Heart left ventricle (tissue), 16 donors: ENCODE measurements at regions of chr2 and their contacts with region 1.

Region 1: GRCh38 chr2:69572641-69573040 is 70.9 kb downstream of the AAK1 start:
- DNase-seq: no peak
- ATAC-seq: peak in 2 of 4 donors; percentile 18 to 36
- H3K4me3 ChIP-seq: peak overlapping the region in 1 of 12 donors; percentile 23
- H3K27ac ChIP-seq: peak overlapping the region in 4 of 12 donors; percentile 6 to 62 (median 38)
- H3K4me1 ChIP-seq: peaks cover 0 to 78% (median 59%) of the 10 kb centered on the region in 12 donors
- H3K27me3 ChIP-seq: no peaks in the 10 kb centered on the region
- CTCF ChIP-seq: no peak
- POLR2A ChIP-seq: no peak

Region 2: GRCh38 chr2:69514406-69514805 is 58.2 kb before region 1 on chr2:
- intact Hi-C with region 1: no loop called
- DNase-seq: peak in 3 of 5 donors; percentile 38 to 76 (median 59)
- ATAC-seq: peak in 3 of 4 donors; percentile 46 to 56 (median 50)
- H3K4me3 ChIP-seq: no peak overlapping the region
- H3K27ac ChIP-seq: no peak overlapping the region
- H3K4me1 ChIP-seq: peaks cover 0 to 37% (median 8%) of the 10 kb centered on the region in 12 donors
- H3K27me3 ChIP-seq: no peaks in the 10 kb centered on the region
- CTCF ChIP-seq: peak in 1 of 12 donors; percentile 25
- POLR2A ChIP-seq: no peak

Region 3: GRCh38 chr2:69619725-69620124 is 47.1 kb after region 1 on chr2:
- intact Hi-C with region 1: loop called in 1 of 10 experiments (anchors 10 kb)
- DNase-seq: no peak
- ATAC-seq: peak in 3 of 4 donors; percentile 23 to 36 (median 28)
- H3K4me3 ChIP-seq: no peak overlapping the region
- H3K27ac ChIP-seq: peak overlapping the region in 2 of 12 donors; percentile 2 to 7
- H3K4me1 ChIP-seq: peaks cover 10 to 89% (median 54%) of the 10 kb centered on the region in 12 donors
- H3K27me3 ChIP-seq: no peaks in the 10 kb centered on the region
- CTCF ChIP-seq: no peak
- POLR2A ChIP-seq: no peak